ENCODE measurements at regions of chr6 and their contacts with region 1.

Region 1: DNA sequence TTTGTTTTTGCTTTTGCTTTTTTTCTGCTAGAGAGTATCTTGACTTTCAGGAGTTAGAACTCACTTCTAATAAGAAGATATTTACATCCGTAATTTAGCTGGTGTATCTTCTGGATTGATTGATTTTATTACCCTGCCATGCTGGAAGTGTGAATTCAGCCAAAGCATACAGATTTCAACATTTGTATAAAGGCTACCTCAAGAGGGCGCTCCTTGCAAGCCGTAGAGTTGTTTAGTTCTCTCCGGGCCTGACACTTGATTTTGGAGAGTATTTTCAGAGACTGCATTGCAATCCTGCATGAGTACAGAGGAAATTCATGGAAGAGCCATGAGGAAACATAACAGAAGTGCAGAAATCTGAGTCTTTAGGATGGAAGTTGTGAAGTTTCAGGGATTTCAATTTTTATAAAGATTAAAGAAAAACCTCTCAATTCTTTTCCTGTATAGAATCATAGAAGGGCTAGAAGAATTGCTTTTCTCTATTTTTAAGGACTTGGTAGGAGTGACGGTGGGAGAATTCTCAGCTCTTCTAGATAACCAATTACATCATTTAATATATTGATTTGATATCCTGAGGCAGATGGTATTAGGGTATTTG is 66.7 kb upstream of the TIAM2 start:
- DNase-seq: peak; percentile 68
- H3K4me3 ChIP-seq: no peak overlapping the region
- H3K27ac ChIP-seq: no peak overlapping the region
- H3K27me3 ChIP-seq: no peaks in the 10 kb centered on the region
- CTCF ChIP-seq: peak; percentile 83

Region 2: GRCh38 chr6:155174576-155175211 is 246.3 kb after region 1 on chr6:
- in situ Hi-C with region 1: loop called (anchors 10 kb)
- DNase-seq: peak; percentile 83
- H3K4me3 ChIP-seq: no peak overlapping the region
- H3K27ac ChIP-seq: no peak overlapping the region
- H3K27me3 ChIP-seq: no peaks in the 10 kb centered on the region
- CTCF ChIP-seq: peak; percentile 77

Region 3: GRCh38 chr6:155273431-155273830 is 345.0 kb after region 1 on chr6:
- in situ Hi-C with region 1: loop called (anchors 25 kb)
- DNase-seq: peak; percentile 99
- H3K4me3 ChIP-seq: no peak overlapping the region
- H3K27ac ChIP-seq: peak overlapping the region; percentile 82
- H3K27me3 ChIP-seq: no peaks in the 10 kb centered on the region
- CTCF ChIP-seq: no peak